Endothelial cell of umbilical vein (primary cell): ENCODE measurements at regions of chr10 and their contacts with region 1.

Region 1: GRCh38 chr10:68074775-68075549 is at the start of gene HERC4:
- DNase-seq: peak; percentile 88
- H3K4me3 ChIP-seq: peak within 1 kb of the TSS; percentile 95 to 99 (median 96)
- H3K27ac ChIP-seq: peak within 1 kb of the TSS; percentile 95
- H3K4me1 ChIP-seq: peaks cover 32% of the 10 kb centered on the region
- H3K27me3 ChIP-seq: no peaks in the 10 kb centered on the region
- CTCF ChIP-seq: no peak
- POLR2A ChIP-seq: peak; percentile 54
- total RNA-seq, gene HERC4: 68.7 and 73.7 TPM in 2 replicates

Region 2: GRCh38 chr10:68001539-68001938 is 73.4 kb before region 1 on chr10:
- CTCF ChIA-PET with region 1: no interaction called
- POLR2A ChIA-PET with region 1: no interaction called
- dilution Hi-C with region 1: no loop called
- intact Hi-C with region 1: no loop called
- DNase-seq: no peak
- H3K4me3 ChIP-seq: no peak overlapping the region
- H3K27ac ChIP-seq: no peak overlapping the region
- H3K4me1 ChIP-seq: no peaks in the 10 kb centered on the region
- H3K27me3 ChIP-seq: no peaks in the 10 kb centered on the region
- CTCF ChIP-seq: no peak
- POLR2A ChIP-seq: no peak

Region 3: GRCh38 chr10:68135922-68136718 is 61.2 kb after region 1 on chr10:
- CTCF ChIA-PET with region 1: no interaction called
- POLR2A ChIA-PET with region 1: no interaction called
- dilution Hi-C with region 1: no loop called
- intact Hi-C with region 1: loop called (anchors 1 kb)
- DNase-seq: peak; percentile 92
- H3K4me3 ChIP-seq: peak overlapping the region in 1 of 3 experiments; percentile 28
- H3K27ac ChIP-seq: peak overlapping the region; percentile 96
- H3K4me1 ChIP-seq: peaks cover 35% of the 10 kb centered on the region
- H3K27me3 ChIP-seq: no peaks in the 10 kb centered on the region
- CTCF ChIP-seq: no peak
- POLR2A ChIP-seq: peak; percentile 39

Region 4: GRCh38 chr10:68331455-68332258 is 256.7 kb after region 1 on chr10 and contains the start of gene HNRNPH3:
- CTCF ChIA-PET with region 1: no interaction called
- POLR2A ChIA-PET with region 1: no interaction called
- dilution Hi-C with region 1: no loop called
- intact Hi-C with region 1: loop called (anchors 2 kb)
- DNase-seq: peak; percentile 98
- H3K4me3 ChIP-seq: peak within 1 kb of the TSS; percentile 95 to 100 (median 99)
- H3K27ac ChIP-seq: peak within 1 kb of the TSS; percentile 91
- H3K4me1 ChIP-seq: peaks cover 15% of the 10 kb centered on the region
- H3K27me3 ChIP-seq: no peaks in the 10 kb centered on the region
- CTCF ChIP-seq: no peak
- POLR2A ChIP-seq: peak; percentile 98
- total RNA-seq, gene HNRNPH3: 146 and 151 TPM in 2 replicates